Panc1 (cell line): ENCODE measurements at regions of chr13 and their contacts with region 1.

Region 1: DNA sequence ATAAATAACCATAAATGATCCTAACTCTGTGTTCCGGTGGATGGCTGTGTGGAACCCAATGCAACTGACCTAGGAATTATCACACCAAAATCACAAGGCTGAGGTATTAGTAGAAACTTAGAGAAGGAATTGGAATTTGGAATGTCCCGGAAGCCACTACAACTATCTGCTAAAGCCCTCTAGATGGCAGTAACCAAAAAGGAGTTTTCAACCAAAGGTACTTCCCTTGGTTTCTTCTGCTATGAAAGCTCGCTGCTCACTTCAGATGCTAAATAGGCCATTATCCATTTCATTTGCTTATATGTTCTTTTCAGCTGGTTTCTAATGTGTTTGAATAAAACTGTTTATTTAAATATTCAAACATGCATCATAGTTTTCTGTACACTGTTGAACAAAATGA is 1589.1 kb upstream of the SPRY2 start:
- DNase-seq: no peak
- ATAC-seq: no peak
- H3K4me3 ChIP-seq: no peak overlapping the region
- H3K27ac ChIP-seq: no peak overlapping the region
- H3K4me1 ChIP-seq: no peaks in the 10 kb centered on the region
- H3K27me3 ChIP-seq: no peaks in the 10 kb centered on the region
- CTCF ChIP-seq: peak; percentile 47; the same call in 1 of the 2 replicates

Region 2: DNA sequence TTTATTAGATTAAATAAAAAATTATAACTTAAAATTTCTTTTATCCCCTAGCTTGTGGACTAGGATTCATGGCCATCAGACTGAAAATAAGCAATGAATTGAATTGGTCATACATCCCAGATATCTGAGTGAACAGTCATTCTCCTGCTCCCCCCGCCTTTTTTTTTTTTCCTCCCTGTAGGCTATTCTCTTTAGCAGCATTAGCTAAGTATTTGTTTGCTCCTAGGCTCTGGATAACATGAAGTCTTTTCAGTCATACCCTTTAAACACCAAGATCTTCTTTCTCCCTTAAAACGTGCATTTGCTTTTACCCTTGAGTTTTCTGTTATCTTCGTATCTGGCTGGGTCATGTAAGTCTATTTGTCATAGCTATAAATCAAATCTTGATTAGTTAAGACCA is 722.4 kb before region 1 on chr13:
- CTCF ChIA-PET with region 1: no interaction called
- POLR2A ChIA-PET with region 1: no interaction called
- in situ Hi-C with region 1: no loop called
- intact Hi-C with region 1: no loop called
- DNase-seq: no peak
- ATAC-seq: no peak
- H3K4me3 ChIP-seq: no peak overlapping the region
- H3K27ac ChIP-seq: no peak overlapping the region
- H3K4me1 ChIP-seq: no peaks in the 10 kb centered on the region
- H3K27me3 ChIP-seq: no peaks in the 10 kb centered on the region
- CTCF ChIP-seq: no peak

Region 3: GRCh38 chr13:81957133-81957532 is 27.1 kb after region 1 on chr13:
- CTCF ChIA-PET with region 1: no interaction called
- POLR2A ChIA-PET with region 1: no interaction called
- in situ Hi-C with region 1: no loop called
- intact Hi-C with region 1: no loop called
- DNase-seq: no peak
- ATAC-seq: no peak
- H3K4me3 ChIP-seq: no peak overlapping the region
- H3K27ac ChIP-seq: no peak overlapping the region
- H3K4me1 ChIP-seq: no peaks in the 10 kb centered on the region
- H3K27me3 ChIP-seq: no peaks in the 10 kb centered on the region
- CTCF ChIP-seq: no peak

Region 4: DNA sequence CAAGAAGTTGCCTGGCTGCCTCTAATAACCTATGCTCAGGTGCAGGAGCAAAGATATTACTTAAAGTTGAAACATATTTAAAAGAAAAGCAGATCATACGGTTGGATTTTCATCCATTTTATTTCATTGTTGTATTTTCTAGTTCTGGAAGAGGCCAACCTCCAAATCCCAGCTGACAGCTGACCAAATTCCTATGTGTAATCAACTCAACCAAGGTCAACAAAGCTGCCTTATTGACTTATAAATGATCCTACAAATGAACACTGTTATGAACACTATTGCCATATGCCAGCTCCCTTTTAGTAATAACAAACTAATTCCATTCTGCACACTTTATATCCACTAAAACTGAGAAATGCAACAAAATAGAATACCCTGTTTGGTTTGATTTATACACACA is 414.9 kb after region 1 on chr13:
- CTCF ChIA-PET with region 1: no interaction called
- POLR2A ChIA-PET with region 1: no interaction called
- in situ Hi-C with region 1: no loop called
- intact Hi-C with region 1: loop called (anchors 10 kb)
- DNase-seq: no peak
- ATAC-seq: no peak
- H3K4me3 ChIP-seq: no peak overlapping the region
- H3K27ac ChIP-seq: no peak overlapping the region
- H3K4me1 ChIP-seq: no peaks in the 10 kb centered on the region
- H3K27me3 ChIP-seq: no peaks in the 10 kb centered on the region
- CTCF ChIP-seq: no peak